Right cardiac atrium (tissue), 5 donors: ENCODE measurements at regions of chr17 and their contacts with region 1.

Region 1: DNA sequence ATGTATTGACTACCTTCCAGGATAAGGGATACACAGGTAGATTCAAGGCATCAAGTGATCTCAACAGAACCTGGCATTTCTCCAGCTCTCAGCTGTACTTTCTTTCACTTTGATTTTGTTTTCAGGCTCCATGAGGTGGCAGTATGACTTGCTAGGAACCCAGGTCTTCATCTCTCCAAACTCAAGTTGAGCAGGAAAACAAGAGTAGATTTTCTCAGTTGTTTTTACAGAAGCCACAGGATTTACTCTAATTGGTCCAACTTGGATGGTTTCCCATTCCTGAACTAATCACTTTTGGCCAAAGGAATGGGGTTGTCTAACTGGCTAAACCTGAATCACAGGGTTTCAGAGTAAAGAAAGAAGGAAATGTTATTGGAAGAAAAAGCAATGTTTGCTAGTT is 146.6 kb downstream of the TRIM37 start:
- DNase-seq: no peak
- ATAC-seq: no peak
- H3K4me3 ChIP-seq: no peak overlapping the region
- H3K27ac ChIP-seq: no peak overlapping the region
- H3K4me1 ChIP-seq: no peaks in the 10 kb centered on the region
- H3K27me3 ChIP-seq: no peaks in the 10 kb centered on the region

Region 2: GRCh38 chr17:58741121-58741625 is 218.9 kb before region 1 on chr17:
- intact Hi-C with region 1: loop called in 1 of 4 experiments (anchors 10 kb)
- DNase-seq: no peak
- ATAC-seq: no peak
- H3K4me3 ChIP-seq: no peak overlapping the region
- H3K27ac ChIP-seq: no peak overlapping the region
- H3K4me1 ChIP-seq: no peaks in the 10 kb centered on the region
- H3K27me3 ChIP-seq: no peaks in the 10 kb centered on the region